Calu3 (cell line): ENCODE measurements at regions of chr15 and their contacts with region 1.

Region 1: GRCh38 chr15:73704869-73705645 is 20.9 kb downstream of the CD276 start:
- DNase-seq: peak; percentile 74
- H3K4me3 Mint-ChIP-seq: no peak overlapping the region
- H3K27ac Mint-ChIP-seq: no peak overlapping the region
- H3K4me1 Mint-ChIP-seq: no peaks in the 10 kb centered on the region
- H3K27me3 Mint-ChIP-seq: no peaks in the 10 kb centered on the region
- CTCF ChIP-seq: peak; percentile 81

Region 2: DNA sequence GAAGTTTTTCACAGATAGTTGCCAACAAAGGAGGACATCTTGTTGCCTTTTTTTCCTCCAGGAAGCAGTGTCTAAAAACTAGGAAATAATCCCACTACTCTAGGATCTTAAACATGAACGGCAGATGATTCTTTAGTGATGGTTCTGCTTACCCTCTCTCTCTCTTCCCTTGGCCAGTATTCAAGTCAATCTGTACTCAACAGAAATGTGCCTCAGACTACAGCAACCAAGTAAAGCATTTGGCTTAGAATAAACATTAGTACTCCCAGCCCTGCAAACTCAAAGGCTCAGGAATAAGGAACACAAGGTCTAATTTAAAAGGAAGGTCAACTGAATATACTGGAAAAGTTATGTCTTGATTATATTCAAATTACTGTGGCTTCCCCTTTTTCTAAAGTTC is 80.5 kb before region 1 on chr15:
- CTCF ChIA-PET with region 1: no interaction called
- intact Hi-C with region 1: no loop called
- DNase-seq: no peak
- H3K4me3 Mint-ChIP-seq: no peak overlapping the region
- H3K27ac Mint-ChIP-seq: no peak overlapping the region
- H3K4me1 Mint-ChIP-seq: peaks cover 16% of the 10 kb centered on the region
- H3K27me3 Mint-ChIP-seq: no peaks in the 10 kb centered on the region
- CTCF ChIP-seq: no peak

Region 3: GRCh38 chr15:73677146-73677607 is 27.9 kb before region 1 on chr15:
- CTCF ChIA-PET with region 1: interaction called, 27 read pairs
- intact Hi-C with region 1: loop called (anchors 1 kb)
- DNase-seq: peak; percentile 79
- H3K4me3 Mint-ChIP-seq: no peak overlapping the region
- H3K27ac Mint-ChIP-seq: no peak overlapping the region
- H3K4me1 Mint-ChIP-seq: no peaks in the 10 kb centered on the region
- H3K27me3 Mint-ChIP-seq: peaks cover 28% of the 10 kb centered on the region
- CTCF ChIP-seq: peak; percentile 88

Region 4: DNA sequence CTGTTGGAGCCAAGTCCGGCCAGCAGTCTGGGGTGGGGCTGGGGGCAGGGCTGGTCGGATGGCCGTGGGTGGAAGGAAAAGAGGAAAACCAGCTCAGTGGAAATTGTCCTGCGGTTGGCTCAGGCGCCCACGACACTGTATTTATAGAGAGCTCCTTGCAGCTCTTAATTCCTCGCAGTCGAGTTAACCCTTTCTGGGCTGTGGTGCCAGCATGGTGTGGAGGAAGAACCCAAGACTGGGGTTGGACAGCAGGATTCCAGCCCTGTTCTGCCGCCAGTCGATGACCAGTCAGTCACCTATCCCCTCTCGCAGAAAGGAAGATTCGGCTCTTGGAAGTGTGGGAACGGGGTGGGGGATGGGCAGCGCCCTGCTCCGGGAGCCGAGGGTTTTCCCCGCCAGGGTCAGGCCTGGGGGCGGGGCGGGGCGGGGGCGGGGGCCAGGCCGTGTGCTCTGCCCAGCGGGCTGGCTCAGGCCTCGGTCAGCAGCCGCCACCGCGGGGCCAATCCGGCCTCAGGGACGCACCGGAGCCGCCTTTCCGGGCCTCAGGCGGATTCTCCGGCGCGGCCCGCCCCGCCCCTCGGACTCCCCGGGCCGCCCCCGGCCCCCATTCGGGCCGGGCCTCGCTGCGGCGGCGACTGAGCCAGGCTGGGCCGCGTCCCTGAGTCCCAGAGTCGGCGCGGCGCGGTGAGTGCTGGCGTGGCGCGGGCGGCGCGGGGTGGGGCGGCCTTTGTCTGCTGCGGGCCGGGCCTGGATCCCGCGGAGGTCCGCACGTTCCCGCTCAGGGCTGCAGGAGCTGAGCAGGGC is 21.1 kb before region 1 on chr15 and contains the start of gene CD276:
- CTCF ChIA-PET with region 1: interaction called, 27 read pairs
- intact Hi-C with region 1: no loop called
- DNase-seq: peak; percentile 83
- H3K4me3 Mint-ChIP-seq: peak within 1 kb of the TSS; percentile 88
- H3K27ac Mint-ChIP-seq: peak within 1 kb of the TSS; percentile 29
- H3K4me1 Mint-ChIP-seq: peaks cover 35% of the 10 kb centered on the region
- H3K27me3 Mint-ChIP-seq: peaks cover 25% of the 10 kb centered on the region
- CTCF ChIP-seq: peak; percentile 31
- total RNA-seq, gene CD276: 83.7 and 84.6 TPM in 2 replicates

Region 5: DNA sequence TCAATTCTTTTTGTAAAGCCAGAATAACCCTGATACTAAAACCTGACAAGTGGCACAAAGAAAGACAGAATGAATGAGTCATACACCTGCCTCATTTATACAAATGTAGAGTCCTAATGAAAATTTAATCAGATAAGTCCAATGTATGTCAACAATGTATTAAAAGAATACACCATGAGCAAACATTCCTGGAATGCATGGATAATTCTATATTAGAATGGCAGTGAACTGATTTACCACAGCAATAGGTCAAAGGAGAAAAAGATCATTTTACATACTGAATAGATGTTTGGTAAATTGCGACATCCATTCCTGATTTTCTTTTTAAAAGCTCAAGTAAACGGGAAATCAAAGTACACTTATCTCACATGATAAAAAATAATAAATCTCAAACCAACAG is 210.0 kb after region 1 on chr15:
- CTCF ChIA-PET with region 1: no interaction called
- intact Hi-C with region 1: no loop called
- DNase-seq: no peak
- H3K4me3 Mint-ChIP-seq: no peak overlapping the region
- H3K27ac Mint-ChIP-seq: no peak overlapping the region
- H3K4me1 Mint-ChIP-seq: peaks cover 11% of the 10 kb centered on the region
- H3K27me3 Mint-ChIP-seq: peaks cover 54% of the 10 kb centered on the region
- CTCF ChIP-seq: no peak